IMR-90 (cell line): ENCODE measurements at regions of chr15 and their contacts with region 1.

Region 1: DNA sequence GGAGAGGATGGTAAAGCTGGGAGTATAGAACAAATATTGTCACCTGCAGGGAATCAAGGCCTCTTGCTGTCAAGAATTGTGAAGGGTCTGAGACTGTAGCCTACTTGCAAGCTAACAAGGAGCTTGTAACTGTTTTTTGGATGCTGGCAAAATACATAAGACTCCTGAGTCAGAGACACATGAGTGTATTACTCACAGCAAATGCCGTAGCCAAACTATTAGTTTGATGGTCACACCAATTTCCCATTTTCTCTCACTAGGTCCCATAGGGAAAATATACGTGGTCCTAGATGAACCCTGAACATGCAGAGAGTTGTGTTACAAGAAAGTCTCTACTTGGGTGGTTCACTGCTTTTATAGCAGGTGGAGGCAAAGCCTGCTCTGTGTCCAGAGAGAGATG is 44.7 kb upstream of the LIPC start:
- DNase-seq: peak; percentile 84
- ATAC-seq: peak; percentile 66
- H3K4me3 ChIP-seq: no peak overlapping the region
- H3K27ac ChIP-seq: peak overlapping the region; percentile 50; the same call in 1 of the 2 replicates
- H3K4me1 ChIP-seq: peaks cover 8% of the 10 kb centered on the region
- H3K27me3 ChIP-seq: no peaks in the 10 kb centered on the region
- CTCF ChIP-seq: no peak
- POLR2A ChIP-seq: no peak
- RAD21 ChIP-seq: no peak

Region 2: DNA sequence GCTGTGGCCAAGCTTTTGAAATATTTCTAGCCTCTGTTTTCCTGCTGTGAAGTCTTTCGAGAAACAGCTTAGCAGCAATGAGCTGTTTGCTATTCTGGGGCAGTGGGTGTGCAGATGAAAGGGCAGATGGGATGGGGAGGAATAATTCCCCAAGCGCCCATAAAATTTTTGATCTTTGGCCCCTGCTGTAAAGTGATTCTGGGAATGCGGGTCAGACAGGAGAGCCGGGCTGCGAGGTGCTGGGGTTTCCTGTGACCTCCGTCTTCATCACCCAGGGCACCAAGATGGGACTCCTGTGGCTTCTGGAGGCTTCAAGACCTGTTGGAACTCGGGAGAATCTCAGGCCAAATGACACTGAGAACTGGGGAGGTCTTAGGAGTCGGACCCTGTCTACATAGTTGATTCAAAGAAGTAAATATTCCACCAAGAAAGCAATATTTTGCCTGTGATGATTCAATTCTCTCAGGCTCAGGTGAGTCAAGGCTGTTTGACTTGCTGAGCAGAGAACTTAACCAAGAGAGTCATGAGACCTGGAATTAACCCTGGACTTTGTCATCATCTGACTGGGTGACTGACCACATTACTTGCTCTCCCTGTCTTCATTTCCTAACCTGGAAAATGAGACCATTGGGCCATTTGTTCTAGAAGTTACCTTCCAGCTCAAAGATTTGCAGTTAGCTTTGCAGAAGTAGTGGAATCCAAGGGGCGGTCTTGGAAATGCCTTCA is 594.2 kb before region 1 on chr15:
- CTCF ChIA-PET with region 1: no interaction called
- POLR2A ChIA-PET with region 1: no interaction called
- dilution Hi-C with region 1: no loop called
- in situ Hi-C with region 1: no loop called
- intact Hi-C with region 1: no loop called
- DNase-seq: no peak
- ATAC-seq: no peak
- H3K4me3 ChIP-seq: no peak overlapping the region
- H3K27ac ChIP-seq: no peak overlapping the region
- H3K4me1 ChIP-seq: no peaks in the 10 kb centered on the region
- H3K27me3 ChIP-seq: peaks cover 8% of the 10 kb centered on the region
- CTCF ChIP-seq: no peak
- POLR2A ChIP-seq: no peak
- RAD21 ChIP-seq: no peak

Region 3: GRCh38 chr15:58551764-58552504 is 164.8 kb after region 1 on chr15:
- CTCF ChIA-PET with region 1: no interaction called
- POLR2A ChIA-PET with region 1: no interaction called
- dilution Hi-C with region 1: no loop called
- in situ Hi-C with region 1: no loop called
- intact Hi-C with region 1: loop called (anchors 5 kb)
- DNase-seq: peak; percentile 96
- ATAC-seq: peak; percentile 68
- H3K4me3 ChIP-seq: peak overlapping the region; percentile 9; the same call in 1 of the 2 replicates
- H3K27ac ChIP-seq: peak overlapping the region; percentile 82
- H3K4me1 ChIP-seq: peaks cover 40% of the 10 kb centered on the region
- H3K27me3 ChIP-seq: peaks cover 6% of the 10 kb centered on the region; the same call in 1 of the 2 replicates
- CTCF ChIP-seq: no peak
- POLR2A ChIP-seq: 0 out of 2 replicates have a peak, but pooled peaks have one; percentile 37
- RAD21 ChIP-seq: no peak

Region 4: GRCh38 chr15:58947179-58947578 is 560.0 kb after region 1 on chr15:
- CTCF ChIA-PET with region 1: no interaction called
- POLR2A ChIA-PET with region 1: no interaction called
- dilution Hi-C with region 1: no loop called
- in situ Hi-C with region 1: no loop called
- intact Hi-C with region 1: no loop called
- DNase-seq: no peak
- ATAC-seq: no peak
- H3K4me3 ChIP-seq: no peak overlapping the region
- H3K27ac ChIP-seq: no peak overlapping the region
- H3K4me1 ChIP-seq: peaks cover 2% of the 10 kb centered on the region
- H3K27me3 ChIP-seq: no peaks in the 10 kb centered on the region
- CTCF ChIP-seq: no peak
- POLR2A ChIP-seq: no peak
- RAD21 ChIP-seq: no peak